ENCODE measurements at regions of chr16 and their contacts with region 1.

Region 1: DNA sequence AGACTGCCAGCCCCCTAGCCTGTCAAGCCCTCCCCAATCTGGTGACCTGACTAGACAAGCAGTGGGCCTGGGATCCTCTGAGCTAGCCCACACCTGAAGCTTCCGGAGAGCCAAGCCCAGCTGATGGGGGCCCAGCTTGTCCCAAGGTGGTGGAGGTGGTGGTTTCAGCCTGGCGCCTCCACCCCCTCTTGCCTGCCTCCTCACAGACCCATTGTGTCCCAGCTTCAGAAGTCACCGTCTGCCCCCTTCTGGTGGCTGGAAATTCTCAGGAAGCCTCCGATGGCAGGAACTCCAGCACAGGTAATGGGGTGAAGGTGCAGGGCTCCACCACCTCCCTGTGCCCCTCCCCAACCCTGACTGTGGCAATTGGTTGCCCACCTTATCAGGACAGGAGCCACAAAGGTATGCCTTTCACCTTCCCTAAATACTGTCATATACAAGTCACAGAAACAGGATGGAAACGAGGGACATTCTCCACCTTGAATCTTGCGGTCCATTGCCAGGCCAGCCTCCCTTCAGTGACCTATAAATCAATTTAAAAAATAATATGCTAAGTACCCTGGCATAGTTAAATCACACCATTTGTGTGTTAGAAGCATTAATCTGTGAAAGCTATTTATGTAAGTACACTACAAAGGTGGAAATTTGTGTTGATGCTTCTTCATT is 66.0 kb upstream of the ZNF423 start:
- DNase-seq: peak; percentile 75
- H3K4me3 ChIP-seq: no peak overlapping the region
- H3K27ac ChIP-seq: no peak overlapping the region
- H3K4me1 ChIP-seq: no peaks in the 10 kb centered on the region
- H3K27me3 ChIP-seq: no peaks in the 10 kb centered on the region
- CTCF ChIP-seq: peak; percentile 81

Region 2: DNA sequence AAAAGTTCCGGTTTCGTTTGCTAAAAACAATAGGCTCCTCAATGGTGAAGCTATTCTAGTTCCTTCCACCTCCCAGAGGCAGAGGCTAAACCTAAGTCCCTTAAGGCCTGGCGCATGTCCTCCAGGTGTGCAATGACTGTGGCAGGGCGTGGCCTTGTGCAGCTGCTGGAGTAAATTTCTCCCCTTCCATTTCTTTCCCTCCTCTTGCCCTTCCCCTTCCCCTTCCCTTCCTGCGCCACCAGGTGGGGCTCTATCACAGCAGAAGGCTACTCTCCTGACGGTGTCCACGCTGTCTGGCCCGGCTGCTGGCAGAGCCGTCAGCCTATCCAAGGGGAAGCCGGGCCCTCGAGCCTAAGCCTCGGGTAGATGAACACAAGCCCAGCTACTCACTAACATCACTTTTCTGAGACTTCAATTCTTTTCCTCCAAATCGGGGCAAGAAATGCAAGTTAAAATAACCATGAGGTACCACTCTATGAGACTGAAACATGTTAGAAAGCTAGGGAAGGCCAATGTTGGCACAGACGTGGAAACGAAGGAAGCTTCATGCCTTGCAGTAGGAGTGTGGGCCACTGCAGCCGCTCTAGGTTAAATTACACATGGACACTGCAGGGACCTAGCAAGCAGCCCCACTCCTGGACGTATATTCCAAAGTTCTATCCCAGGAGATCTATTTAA is 513.9 kb before region 1 on chr16:
- CTCF ChIA-PET with region 1: interaction called, 9 read pairs
- POLR2A ChIA-PET with region 1: no interaction called
- intact Hi-C with region 1: loop called (anchors 1 kb)
- DNase-seq: peak; percentile 87
- H3K4me3 ChIP-seq: no peak overlapping the region
- H3K27ac ChIP-seq: no peak overlapping the region
- H3K4me1 ChIP-seq: no peaks in the 10 kb centered on the region
- H3K27me3 ChIP-seq: no peaks in the 10 kb centered on the region
- CTCF ChIP-seq: peak; percentile 89

Region 3: GRCh38 chr16:49491771-49492761 is 429.9 kb before region 1 on chr16:
- CTCF ChIA-PET with region 1: no interaction called
- POLR2A ChIA-PET with region 1: no interaction called
- intact Hi-C with region 1: loop called (anchors 2 kb)
- DNase-seq: peak; percentile 49
- H3K4me3 ChIP-seq: no peak overlapping the region
- H3K27ac ChIP-seq: no peak overlapping the region
- H3K4me1 ChIP-seq: peaks cover 12% of the 10 kb centered on the region
- H3K27me3 ChIP-seq: no peaks in the 10 kb centered on the region
- CTCF ChIP-seq: peak; percentile 88

Region 4: GRCh38 chr16:49564496-49565229 is 357.3 kb before region 1 on chr16:
- CTCF ChIA-PET with region 1: interaction called, 10 read pairs
- POLR2A ChIA-PET with region 1: no interaction called
- intact Hi-C with region 1: loop called (anchors 5 kb)
- DNase-seq: peak; percentile 81
- H3K4me3 ChIP-seq: no peak overlapping the region
- H3K27ac ChIP-seq: peak overlapping the region; percentile 65
- H3K4me1 ChIP-seq: peaks cover 30% of the 10 kb centered on the region
- H3K27me3 ChIP-seq: no peaks in the 10 kb centered on the region
- CTCF ChIP-seq: no peak

Region 5: DNA sequence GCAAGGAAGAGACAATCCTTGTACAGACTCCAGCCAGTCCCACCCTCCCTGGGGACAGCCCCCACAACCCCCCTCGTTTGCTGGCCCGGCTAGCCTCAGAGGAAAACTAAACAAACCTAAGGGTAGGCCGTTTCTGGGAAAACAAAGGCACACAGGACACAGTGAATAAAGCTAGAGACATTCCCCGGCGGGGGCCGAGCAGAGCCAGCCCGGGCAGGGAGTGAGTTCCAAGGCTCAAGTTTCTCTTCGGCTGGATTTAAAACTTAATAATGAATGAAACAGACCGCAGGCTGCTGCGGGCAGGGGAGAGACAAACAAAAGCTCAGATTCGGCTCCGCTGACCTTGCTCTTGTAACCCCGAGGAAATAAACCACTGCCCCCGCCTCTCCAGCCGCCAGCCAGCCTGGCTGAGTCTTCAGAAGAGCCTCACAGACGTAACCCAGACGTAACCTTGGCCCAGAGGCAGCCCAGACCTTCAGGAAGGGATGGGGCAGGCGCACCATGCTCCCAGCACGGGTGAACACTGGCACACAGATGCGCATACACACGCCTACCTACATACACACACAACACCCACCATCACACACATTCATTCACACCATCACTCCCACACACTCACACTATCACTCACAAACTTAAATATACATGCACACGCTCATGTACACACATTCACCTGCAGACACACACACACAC is 282.0 kb before region 1 on chr16:
- CTCF ChIA-PET with region 1: interaction called, 5 read pairs
- POLR2A ChIA-PET with region 1: no interaction called
- intact Hi-C with region 1: loop called (anchors 5 kb)
- DNase-seq: no peak
- H3K4me3 ChIP-seq: no peak overlapping the region
- H3K27ac ChIP-seq: no peak overlapping the region
- H3K4me1 ChIP-seq: peaks cover 8% of the 10 kb centered on the region
- H3K27me3 ChIP-seq: no peaks in the 10 kb centered on the region
- CTCF ChIP-seq: no peak